A549 (cell line): ENCODE measurements at regions of chr16 and their contacts with region 1.

Region 1: DNA sequence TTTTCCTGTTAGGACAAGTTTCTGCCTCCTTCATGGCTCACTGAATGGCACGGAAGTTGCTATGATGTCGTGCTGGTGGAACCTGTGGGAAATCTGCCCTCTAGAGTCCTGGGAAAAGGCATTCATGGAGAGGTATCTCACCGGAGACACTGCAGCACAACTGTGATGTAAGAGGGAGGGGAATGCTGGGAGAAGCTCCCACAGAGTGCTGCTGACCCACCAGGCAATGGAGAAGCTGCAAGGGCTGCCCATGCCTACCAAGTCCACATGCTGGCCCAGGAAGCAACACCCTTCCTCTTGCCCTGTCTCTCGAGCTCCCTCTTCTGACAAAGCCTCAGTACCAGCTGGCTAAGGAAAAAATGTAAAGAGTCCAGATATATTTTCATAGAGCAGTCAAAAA is 45.2 kb upstream of the SLC5A11 start:
- DNase-seq: peak; percentile 32 to 75
- ATAC-seq: peak; percentile 80 to 86
- H3K4me3 ChIP-seq: no peak overlapping the region
- H3K27ac ChIP-seq: 0 out of 6 replicates have a peak overlapping the region, but pooled peaks of 1 of the 2 experiments have one; percentile 4
- H3K4me1 ChIP-seq: no peaks in the 10 kb centered on the region
- CTCF ChIP-seq: peak; percentile 61
- EP300 ChIP-seq: no peak
- POLR2A ChIP-seq: no peak
- RAD21 ChIP-seq: peak; percentile 73 to 76

Region 2: GRCh38 chr16:24568392-24568791 is 232.2 kb before region 1 on chr16:
- CTCF ChIA-PET with region 1: interaction called, 10 read pairs
- POLR2A ChIA-PET with region 1: no interaction called
- DNase-seq: peak in 1 of 2 experiments; percentile 53
- ATAC-seq: peak in 1 of 2 experiments; percentile 33; a peak in 1 of 6 replicates
- H3K4me3 ChIP-seq: no peak overlapping the region
- H3K27ac ChIP-seq: no peak overlapping the region
- H3K4me1 ChIP-seq: no peaks in the 10 kb centered on the region
- CTCF ChIP-seq: peak; percentile 65
- EP300 ChIP-seq: no peak
- POLR2A ChIP-seq: no peak
- RAD21 ChIP-seq: peak; percentile 69 to 70

Region 3: GRCh38 chr16:24815022-24815421 is 14.4 kb after region 1 on chr16:
- CTCF ChIA-PET with region 1: interaction called, 12 read pairs
- POLR2A ChIA-PET with region 1: no interaction called
- DNase-seq: no peak
- ATAC-seq: no peak
- H3K4me3 ChIP-seq: no peak overlapping the region
- H3K27ac ChIP-seq: no peak overlapping the region
- H3K4me1 ChIP-seq: no peaks in the 10 kb centered on the region
- CTCF ChIP-seq: no peak
- EP300 ChIP-seq: no peak
- POLR2A ChIP-seq: no peak
- RAD21 ChIP-seq: no peak